CD8-positive, alpha-beta T cell (primary cell): ENCODE measurements at regions of chr19 and their contacts with region 1.

Region 1: DNA sequence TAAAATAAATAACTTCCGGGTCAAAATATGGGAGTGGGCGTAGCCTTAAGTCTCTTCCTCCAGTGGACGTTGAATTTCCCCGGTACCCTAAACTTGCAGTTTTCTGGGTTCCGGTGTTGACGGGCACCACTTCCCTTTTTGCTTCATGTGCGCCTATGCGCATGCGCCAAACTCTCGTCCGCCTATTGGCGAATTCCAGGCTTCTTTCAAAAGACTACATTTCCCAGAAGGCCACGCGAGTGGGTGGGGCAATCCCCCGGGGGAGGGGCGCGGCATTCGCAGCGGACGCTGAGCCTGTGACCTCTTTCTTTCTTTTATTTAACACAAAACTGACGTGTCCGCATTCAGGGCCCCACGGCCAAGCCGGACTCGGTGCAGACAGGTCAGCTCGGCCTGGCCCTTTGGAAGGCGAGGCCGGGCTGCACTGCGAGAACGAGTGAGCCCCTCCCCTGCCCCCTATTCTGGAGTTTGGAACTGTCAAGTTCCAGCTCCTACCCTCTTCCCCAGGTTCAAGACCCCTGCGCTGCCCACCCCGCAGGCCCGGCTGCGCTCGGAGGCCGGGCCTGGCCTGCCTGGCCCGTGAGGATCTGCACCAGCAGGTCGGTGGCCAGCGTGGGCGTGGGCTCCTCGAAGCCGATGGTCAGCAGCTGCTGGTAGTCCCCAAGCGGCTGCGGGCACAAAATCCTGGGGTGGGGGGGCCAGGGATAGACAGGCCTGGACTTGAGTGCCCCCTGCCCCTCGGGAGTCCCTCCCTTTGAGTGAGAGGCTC is 4.1 kb downstream of the C19orf67 start:
- DNase-seq: peak; percentile 98 to 100 (median 99)
- ATAC-seq: peak; percentile 93
- H3K4me3 ChIP-seq: peak overlapping the region; percentile 77 to 89
- H3K4me3 Mint-ChIP-seq: peak overlapping the region; percentile 91
- H3K27ac ChIP-seq: peak overlapping the region; percentile 60 to 83
- H3K27ac Mint-ChIP-seq: peak overlapping the region; percentile 90
- H3K4me1 ChIP-seq: peaks cover 17% of the 10 kb centered on the region
- H3K4me1 Mint-ChIP-seq: peaks cover 20% of the 10 kb centered on the region
- H3K27me3 ChIP-seq: no peaks in the 10 kb centered on the region
- H3K27me3 Mint-ChIP-seq: no peaks in the 10 kb centered on the region
- CTCF ChIP-seq: no peak

Region 2: DNA sequence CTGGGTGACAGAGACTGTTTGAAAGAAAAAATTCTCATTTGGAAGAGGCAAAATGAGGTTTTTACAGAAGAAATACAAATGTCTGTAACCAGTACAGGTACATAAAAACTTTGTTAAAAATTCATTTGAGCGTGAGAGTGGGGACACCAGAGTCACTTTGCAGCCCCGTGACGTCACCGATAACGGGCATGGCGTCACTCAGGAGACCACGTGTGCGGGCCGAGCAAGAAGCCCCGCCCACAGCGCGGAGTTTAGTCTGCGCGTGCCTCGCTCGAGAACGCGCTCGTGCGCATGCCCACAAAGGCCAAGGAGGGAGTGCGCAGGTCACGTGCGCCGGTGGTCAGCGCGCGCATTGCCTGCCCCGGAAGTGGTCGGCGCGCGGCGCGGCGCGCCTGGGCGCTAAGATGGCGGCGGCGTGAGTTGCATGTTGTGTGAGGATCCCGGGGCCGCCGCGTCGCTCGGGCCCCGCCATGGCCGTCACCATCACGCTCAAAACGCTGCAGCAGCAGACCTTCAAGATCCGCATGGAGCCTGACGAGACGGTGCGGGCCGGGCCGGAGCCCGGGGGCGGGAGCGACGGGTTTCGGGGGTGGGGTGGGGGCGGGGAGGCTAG is 1135.9 kb before region 1 on chr19 and contains the start of gene RAD23A:
- CTCF ChIA-PET with region 1: no interaction called
- POLR2A ChIA-PET with region 1: no interaction called
- intact Hi-C with region 1: loop called in 1 of 2 experiments (anchors 5 kb)
- DNase-seq: peak; percentile 97 to 100 (median 98)
- ATAC-seq: peak; percentile 86
- H3K4me3 ChIP-seq: peak within 1 kb of the TSS; percentile 60 to 64
- H3K4me3 Mint-ChIP-seq: peak within 1 kb of the TSS; percentile 91
- H3K27ac ChIP-seq: peak within 1 kb of the TSS; percentile 67 to 83
- H3K27ac Mint-ChIP-seq: peak within 1 kb of the TSS; percentile 96
- H3K4me1 ChIP-seq: peaks cover 35% of the 10 kb centered on the region
- H3K4me1 Mint-ChIP-seq: peaks cover 43% of the 10 kb centered on the region
- H3K27me3 ChIP-seq: no peaks in the 10 kb centered on the region
- H3K27me3 Mint-ChIP-seq: no peaks in the 10 kb centered on the region
- CTCF ChIP-seq: no peak
- total RNA-seq, gene RAD23A: 86.3 to 90.8 TPM

Region 3: DNA sequence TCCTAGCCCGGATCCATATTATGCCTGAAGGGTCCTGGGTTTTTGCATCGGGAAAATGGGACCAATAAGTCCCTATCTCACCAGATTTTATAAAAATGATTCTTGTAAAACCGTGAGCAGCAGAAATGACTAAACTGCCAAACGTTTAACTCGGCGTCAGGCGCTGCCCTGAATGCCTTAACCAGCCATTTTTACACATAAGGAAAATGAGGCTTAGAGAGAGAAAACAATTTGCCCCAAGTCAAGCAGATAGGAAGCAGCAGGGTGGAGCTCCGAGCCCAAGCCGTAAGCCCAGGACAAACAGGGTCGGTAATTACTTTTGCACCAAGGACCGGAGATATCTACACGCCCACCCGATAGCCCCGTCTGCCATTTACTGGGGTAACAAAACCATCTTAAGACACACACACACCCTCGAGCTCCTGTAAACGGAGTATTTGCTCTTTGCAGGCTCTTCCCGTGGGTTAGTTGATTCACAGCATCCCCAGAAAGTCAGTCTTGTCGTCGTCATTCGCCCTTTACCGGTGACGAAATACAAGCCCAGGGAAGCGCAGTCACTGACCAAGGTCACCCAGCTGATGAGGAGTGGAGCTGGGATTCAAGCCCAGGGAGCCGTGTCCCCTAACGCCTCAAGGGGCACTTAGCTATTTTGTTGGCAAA is 333.2 kb before region 1 on chr19:
- CTCF ChIA-PET with region 1: no interaction called
- POLR2A ChIA-PET with region 1: interaction called, 4 read pairs
- intact Hi-C with region 1: loop called in 1 of 2 experiments (anchors 1 kb)
- DNase-seq: peak in 2 of 9 experiments; percentile 23 to 55
- ATAC-seq: peak; percentile 8
- H3K4me3 ChIP-seq: peak overlapping the region; percentile 85 to 97
- H3K4me3 Mint-ChIP-seq: peak overlapping the region; percentile 90
- H3K27ac ChIP-seq: peak overlapping the region; percentile 96 to 98
- H3K27ac Mint-ChIP-seq: peak overlapping the region; percentile 92
- H3K4me1 ChIP-seq: peaks cover 22% of the 10 kb centered on the region
- H3K4me1 Mint-ChIP-seq: peaks cover 23% of the 10 kb centered on the region
- H3K27me3 ChIP-seq: no peaks in the 10 kb centered on the region
- H3K27me3 Mint-ChIP-seq: no peaks in the 10 kb centered on the region
- CTCF ChIP-seq: no peak

Region 4: GRCh38 chr19:13774217-13775191 is 307.0 kb before region 1 on chr19 and contains the start of gene C19orf53:
- CTCF ChIA-PET with region 1: no interaction called
- POLR2A ChIA-PET with region 1: no interaction called
- intact Hi-C with region 1: loop called (anchors 1 kb)
- DNase-seq: peak; percentile 66 to 94 (median 87)
- ATAC-seq: peak; percentile 96
- H3K4me3 ChIP-seq: peak within 1 kb of the TSS; percentile 89 to 91
- H3K4me3 Mint-ChIP-seq: peak within 1 kb of the TSS; percentile 99
- H3K27ac ChIP-seq: peak within 1 kb of the TSS; percentile 83 to 85
- H3K27ac Mint-ChIP-seq: peak within 1 kb of the TSS; percentile 97
- H3K4me1 ChIP-seq: peaks cover 17% of the 10 kb centered on the region
- H3K4me1 Mint-ChIP-seq: peaks cover 25% of the 10 kb centered on the region
- H3K27me3 ChIP-seq: no peaks in the 10 kb centered on the region
- H3K27me3 Mint-ChIP-seq: no peaks in the 10 kb centered on the region
- CTCF ChIP-seq: no peak
- total RNA-seq, gene C19orf53: 116 TPM

Region 5: DNA sequence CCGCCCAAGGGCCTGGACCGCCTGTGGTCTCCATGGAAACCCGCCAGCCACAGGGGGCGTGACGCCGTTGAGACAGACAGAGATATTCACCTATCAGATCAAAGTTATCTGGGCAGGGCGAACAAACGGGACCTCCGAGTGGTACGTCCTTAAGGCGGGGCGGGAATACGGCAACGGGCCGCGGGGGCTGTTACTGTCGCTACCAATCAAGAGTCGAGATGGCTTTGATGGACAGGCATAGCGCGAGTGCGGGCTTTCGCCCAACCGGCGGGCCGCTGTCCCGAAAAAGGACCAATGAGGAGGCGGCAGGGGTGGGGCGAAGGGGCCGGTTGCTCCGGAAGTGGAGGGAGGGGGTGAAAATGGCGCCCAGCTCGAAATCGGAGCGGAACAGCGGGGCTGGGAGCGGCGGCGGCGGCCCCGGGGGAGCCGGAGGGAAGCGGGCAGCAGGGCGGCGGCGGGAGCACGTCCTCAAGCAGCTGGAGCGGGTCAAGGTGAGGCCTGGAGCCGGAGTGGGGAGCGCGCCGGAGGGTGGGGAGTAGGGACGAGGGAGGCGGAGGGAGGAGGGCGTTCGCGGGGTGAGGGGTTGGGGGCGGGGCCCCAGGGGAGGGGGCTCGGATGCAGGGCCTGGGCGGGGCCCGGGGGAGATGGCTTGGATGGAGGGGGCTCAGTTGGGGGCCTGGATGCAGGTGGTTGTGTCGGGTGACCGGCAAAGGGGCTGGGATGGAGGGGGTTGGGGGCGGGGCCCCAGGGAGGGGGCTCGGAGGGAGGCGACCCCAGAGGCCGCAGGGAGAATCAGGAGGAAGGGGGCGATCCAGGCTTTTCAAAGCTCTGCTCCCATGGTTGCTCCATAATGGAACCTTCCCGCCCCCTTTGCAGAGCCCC is 129.1 kb before region 1 on chr19 and contains the start of gene DCAF15:
- CTCF ChIA-PET with region 1: interaction called, 3 read pairs
- POLR2A ChIA-PET with region 1: interaction called, 6 read pairs
- intact Hi-C with region 1: loop called (anchors 1 kb)
- DNase-seq: peak; percentile 96 to 100 (median 99)
- ATAC-seq: peak; percentile 96
- H3K4me3 ChIP-seq: peak within 1 kb of the TSS; percentile 63 to 73
- H3K4me3 Mint-ChIP-seq: peak within 1 kb of the TSS; percentile 96
- H3K27ac ChIP-seq: peak within 1 kb of the TSS; percentile 76 to 78
- H3K27ac Mint-ChIP-seq: peak within 1 kb of the TSS; percentile 92
- H3K4me1 ChIP-seq: peaks cover 14% of the 10 kb centered on the region
- H3K4me1 Mint-ChIP-seq: peaks cover 21% of the 10 kb centered on the region
- H3K27me3 ChIP-seq: no peaks in the 10 kb centered on the region
- H3K27me3 Mint-ChIP-seq: no peaks in the 10 kb centered on the region
- CTCF ChIP-seq: no peak
- total RNA-seq, gene DCAF15: 86.5 to 101 TPM

Region 6: DNA sequence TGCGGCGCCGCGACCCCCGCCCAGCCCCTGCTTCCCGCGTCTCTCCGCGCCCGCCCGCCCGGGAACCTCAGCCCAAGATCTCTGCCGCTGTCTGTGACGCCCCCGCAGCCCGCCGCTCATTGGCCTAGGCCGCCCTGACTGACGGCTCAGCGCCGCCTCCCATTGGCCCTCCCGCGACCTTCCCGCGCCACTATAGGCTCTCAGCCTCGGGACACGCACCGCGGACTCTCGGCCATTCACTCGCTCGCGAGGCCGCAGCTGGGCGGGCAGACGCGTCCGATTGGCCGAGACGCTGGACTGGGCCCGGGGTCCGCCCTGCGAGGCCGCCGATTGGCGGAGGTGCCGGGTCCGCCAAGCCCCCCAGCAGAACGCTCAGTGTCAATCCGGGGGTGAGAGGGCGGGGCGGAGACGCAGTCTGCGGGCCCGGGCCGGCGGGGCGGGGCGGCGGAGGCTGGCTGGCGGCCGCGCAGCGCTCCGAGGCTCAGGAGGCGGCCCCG is 36.2 kb after region 1 on chr19 and contains the start of gene PRKACA:
- CTCF ChIA-PET with region 1: interaction called, 6 read pairs
- POLR2A ChIA-PET with region 1: interaction called, 3 read pairs
- intact Hi-C with region 1: loop called (anchors 1 to 2 kb)
- DNase-seq: peak; percentile 95 to 99 (median 98)
- ATAC-seq: peak; percentile 90
- H3K4me3 ChIP-seq: peak within 1 kb of the TSS; percentile 67 to 72
- H3K4me3 Mint-ChIP-seq: peak within 1 kb of the TSS; percentile 94
- H3K27ac ChIP-seq: peak within 1 kb of the TSS; percentile 52 to 86
- H3K27ac Mint-ChIP-seq: peak within 1 kb of the TSS; percentile 99
- H3K4me1 ChIP-seq: peaks cover 42% of the 10 kb centered on the region
- H3K4me1 Mint-ChIP-seq: peaks cover 41% of the 10 kb centered on the region
- H3K27me3 ChIP-seq: no peaks in the 10 kb centered on the region
- H3K27me3 Mint-ChIP-seq: no peaks in the 10 kb centered on the region
- CTCF ChIP-seq: no peak
- total RNA-seq, gene PRKACA: 37.0 to 40.8 TPM

Region 7: DNA sequence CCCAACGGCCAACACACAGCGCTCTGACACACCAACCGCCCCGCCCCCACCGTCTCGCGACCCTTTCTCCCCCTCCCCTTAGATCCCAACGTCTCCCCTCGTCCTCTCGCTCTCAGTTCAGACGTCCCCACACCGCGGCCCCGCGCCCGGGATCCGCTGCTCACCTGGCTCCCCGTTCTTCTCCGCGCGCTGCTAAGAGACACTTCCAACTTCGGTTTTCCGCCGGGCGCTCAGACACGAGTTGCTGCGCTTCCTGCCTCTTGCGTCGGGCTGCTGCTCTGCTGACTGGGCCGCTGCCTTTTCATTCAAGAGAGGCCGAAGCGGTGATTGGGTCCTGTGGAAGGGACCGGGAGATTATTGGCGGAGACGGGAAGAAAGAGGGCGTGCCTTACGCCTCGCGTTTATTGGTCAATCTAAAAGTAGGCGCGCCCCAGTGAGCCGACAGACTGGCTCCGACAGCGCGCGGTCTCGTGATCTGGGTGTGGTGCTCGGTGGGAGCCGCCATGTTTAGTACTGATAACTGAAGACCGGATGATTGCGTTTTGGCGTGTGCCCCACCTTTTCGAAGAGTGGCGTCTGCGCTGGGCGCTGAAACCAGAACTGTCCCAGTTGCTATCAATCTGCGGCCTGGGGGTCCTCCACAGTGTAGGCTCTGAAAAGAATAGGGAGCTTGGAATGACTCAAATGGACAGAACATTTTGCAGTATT is 337.8 kb after region 1 on chr19 and contains the start of gene DDX39A:
- CTCF ChIA-PET with region 1: no interaction called
- POLR2A ChIA-PET with region 1: no interaction called
- intact Hi-C with region 1: loop called in 1 of 2 experiments (anchors 1 kb)
- DNase-seq: peak; percentile 92 to 99 (median 96)
- ATAC-seq: peak; percentile 86
- H3K4me3 ChIP-seq: peak within 1 kb of the TSS; percentile 63 to 96
- H3K4me3 Mint-ChIP-seq: peak within 1 kb of the TSS; percentile 92
- H3K27ac ChIP-seq: peak within 1 kb of the TSS; percentile 61 to 94
- H3K27ac Mint-ChIP-seq: peak within 1 kb of the TSS; percentile 95
- H3K4me1 ChIP-seq: peaks cover 42% of the 10 kb centered on the region
- H3K4me1 Mint-ChIP-seq: peaks cover 42% of the 10 kb centered on the region
- H3K27me3 ChIP-seq: no peaks in the 10 kb centered on the region
- H3K27me3 Mint-ChIP-seq: no peaks in the 10 kb centered on the region
- CTCF ChIP-seq: no peak
- total RNA-seq, gene DDX39A: 342 to 372 TPM

Region 8: GRCh38 chr19:15129856-15130597 is 1048.5 kb after region 1 on chr19:
- CTCF ChIA-PET with region 1: no interaction called
- POLR2A ChIA-PET with region 1: no interaction called
- intact Hi-C with region 1: no loop called
- DNase-seq: peak in 3 of 9 experiments; percentile 26 to 66 (median 29)
- ATAC-seq: no peak
- H3K4me3 ChIP-seq: peak overlapping the region in 1 of 2 experiments; percentile 19
- H3K4me3 Mint-ChIP-seq: peak overlapping the region; percentile 50
- H3K27ac ChIP-seq: peak overlapping the region in 1 of 2 experiments; percentile 9
- H3K27ac Mint-ChIP-seq: peak overlapping the region; percentile 70
- H3K4me1 ChIP-seq: peaks cover 18% of the 10 kb centered on the region
- H3K4me1 Mint-ChIP-seq: peaks cover 30% of the 10 kb centered on the region
- H3K27me3 ChIP-seq: no peaks in the 10 kb centered on the region
- H3K27me3 Mint-ChIP-seq: no peaks in the 10 kb centered on the region
- CTCF ChIP-seq: no peak